ENCODE measurements at regions of chr5 and their contacts with region 1.

Region 1: GRCh38 chr5:112551419-112552032 is 132.4 kb upstream of the EPB41L4A start:
- DNase-seq: peak in 2 of 10 donors; percentile 33 to 56
- H3K4me3 ChIP-seq: peak overlapping the region in 3 of 59 donors; percentile 8 to 13 (median 9)
- H3K27ac ChIP-seq: peak overlapping the region in 52 of 59 donors; percentile 1 to 88 (median 62)
- H3K27me3 ChIP-seq: no peaks in the 10 kb centered on the region
- CTCF ChIP-seq: peak; percentile 55 to 97 (median 87)

Region 2: DNA sequence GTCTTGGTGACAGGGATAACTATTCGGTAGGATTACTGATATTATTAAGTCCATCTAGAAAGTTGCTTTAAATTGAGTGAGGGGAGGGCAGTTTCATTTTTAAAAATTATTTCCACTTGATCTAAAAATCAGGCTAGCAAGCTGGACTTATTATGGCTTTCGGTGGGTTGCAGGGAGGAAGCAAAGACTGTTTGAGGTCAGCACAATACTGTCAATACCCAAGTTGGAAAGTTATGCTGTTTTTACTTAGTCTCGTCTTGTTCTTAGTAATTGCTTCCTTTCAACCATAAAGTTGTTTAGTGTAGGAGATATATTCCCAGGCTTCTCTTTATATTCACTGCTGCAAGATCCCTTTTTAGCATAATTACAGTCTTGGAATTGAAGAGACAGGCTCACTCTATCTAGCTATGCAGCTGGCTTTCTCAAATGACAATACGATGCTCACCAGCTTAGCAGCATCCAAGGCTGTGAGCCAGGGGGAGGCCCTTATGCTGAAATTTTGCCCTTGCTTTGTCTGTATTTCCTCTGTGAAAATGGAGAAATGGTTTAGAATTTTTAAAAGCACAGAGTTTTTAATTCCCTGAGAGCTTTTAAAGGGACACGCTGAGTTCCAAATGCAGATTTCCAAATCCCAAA is 117.9 kb after region 1 on chr5:
- intact Hi-C with region 1: loop called in 1 of 2 experiments (anchors 10 kb)
- DNase-seq: peak in 2 of 10 donors; percentile 37 to 51
- H3K4me3 ChIP-seq: peak overlapping the region in 10 of 59 donors; percentile 1 to 26 (median 12)
- H3K27ac ChIP-seq: peak overlapping the region in 28 of 59 donors; percentile 5 to 70 (median 36)
- H3K27me3 ChIP-seq: no peaks in the 10 kb centered on the region
- CTCF ChIP-seq: no peak

Region 3: GRCh38 chr5:112737463-112738190 is 186.1 kb after region 1 on chr5 and contains the start of gene APC:
- intact Hi-C with region 1: loop called in 1 of 2 experiments (anchors 5 kb)
- DNase-seq: peak; percentile 95 to 99 (median 99)
- H3K4me3 ChIP-seq: peak within 1 kb of the TSS; percentile 50 to 95 (median 75)
- H3K27ac ChIP-seq: peak within 1 kb of the TSS; percentile 53 to 97 (median 90)
- H3K27me3 ChIP-seq: no peaks in the 10 kb centered on the region
- CTCF ChIP-seq: peak in 22 of 56 donors; percentile 3 to 47 (median 15)
- total RNA-seq, gene APC: 149 to 320 (median 208) TPM

Region 4: DNA sequence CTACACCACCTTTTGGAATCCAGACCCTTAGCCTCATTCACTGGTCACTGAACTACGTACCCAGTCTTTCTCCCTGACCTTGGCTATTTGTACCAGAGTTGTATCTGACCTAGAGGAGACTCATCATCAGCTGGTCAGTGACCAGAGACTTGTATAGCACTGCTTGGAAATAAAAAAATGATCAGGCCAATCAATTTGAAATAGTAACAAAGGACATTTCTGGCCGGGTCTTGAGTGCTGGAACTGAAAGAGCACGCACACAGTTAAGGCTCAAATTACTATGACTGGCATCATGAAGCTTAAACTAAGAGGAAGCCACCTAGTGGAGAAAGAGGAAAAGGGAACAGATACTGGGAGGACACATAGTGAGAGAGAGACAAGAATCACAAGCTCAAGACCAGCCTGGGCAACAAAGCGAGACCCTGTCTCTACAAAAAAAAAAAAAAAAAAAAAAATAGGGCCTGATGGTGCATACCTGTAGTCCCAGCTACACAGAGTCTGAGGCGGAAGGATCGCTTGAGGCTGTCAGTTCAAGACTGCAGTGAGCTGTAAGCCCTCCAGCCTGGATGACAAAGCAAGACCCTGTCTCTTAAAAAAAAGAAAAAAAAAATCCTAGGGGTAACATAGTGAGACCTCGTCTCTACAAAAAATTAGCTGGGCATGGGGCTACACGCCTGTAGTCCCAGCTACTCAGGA is 296.7 kb after region 1 on chr5:
- intact Hi-C with region 1: loop called in 1 of 2 experiments (anchors 5 kb)
- DNase-seq: no peak
- H3K4me3 ChIP-seq: peak overlapping the region in 2 of 59 donors; percentile 7 to 21
- H3K27ac ChIP-seq: no peak overlapping the region
- H3K27me3 ChIP-seq: no peaks in the 10 kb centered on the region
- CTCF ChIP-seq: peak; percentile 26 to 73 (median 61)